ENCODE measurements at regions of chr10 and their contacts with region 1.

Region 1: DNA sequence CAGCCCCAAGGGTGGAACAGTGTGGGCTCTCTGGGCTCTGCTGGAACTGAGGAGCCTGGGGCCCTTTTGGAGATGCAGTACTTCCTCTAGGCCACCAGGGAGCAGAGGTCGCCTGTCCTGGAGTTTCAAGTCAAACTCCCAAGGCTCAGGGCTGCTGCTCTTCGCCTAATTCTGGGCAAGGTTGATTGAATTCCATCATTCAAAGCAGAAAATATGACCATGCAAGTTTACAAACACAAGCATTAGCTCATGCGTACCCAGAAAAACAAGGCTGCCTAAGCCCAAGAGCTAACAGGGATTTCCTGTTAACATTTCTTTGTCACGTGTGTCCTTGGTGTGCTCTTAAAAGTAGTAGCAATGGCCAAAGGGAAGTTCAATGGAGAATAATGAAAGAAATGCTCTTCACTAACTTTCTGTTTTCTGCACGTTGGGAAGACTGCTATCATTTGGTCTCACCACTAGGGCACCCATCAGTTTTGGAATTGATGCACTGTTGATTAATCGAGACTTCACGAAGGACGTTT is 20.1 kb downstream of the LDB3 start:
- DNase-seq: peak; percentile 48
- H3K4me3 ChIP-seq: no peak overlapping the region
- H3K27ac ChIP-seq: no peak overlapping the region
- H3K4me1 ChIP-seq: no peaks in the 10 kb centered on the region
- H3K27me3 ChIP-seq: no peaks in the 10 kb centered on the region
- CTCF ChIP-seq: peak; percentile 73 to 84 (median 79)
- POLR2A ChIP-seq: no peak

Region 2: DNA sequence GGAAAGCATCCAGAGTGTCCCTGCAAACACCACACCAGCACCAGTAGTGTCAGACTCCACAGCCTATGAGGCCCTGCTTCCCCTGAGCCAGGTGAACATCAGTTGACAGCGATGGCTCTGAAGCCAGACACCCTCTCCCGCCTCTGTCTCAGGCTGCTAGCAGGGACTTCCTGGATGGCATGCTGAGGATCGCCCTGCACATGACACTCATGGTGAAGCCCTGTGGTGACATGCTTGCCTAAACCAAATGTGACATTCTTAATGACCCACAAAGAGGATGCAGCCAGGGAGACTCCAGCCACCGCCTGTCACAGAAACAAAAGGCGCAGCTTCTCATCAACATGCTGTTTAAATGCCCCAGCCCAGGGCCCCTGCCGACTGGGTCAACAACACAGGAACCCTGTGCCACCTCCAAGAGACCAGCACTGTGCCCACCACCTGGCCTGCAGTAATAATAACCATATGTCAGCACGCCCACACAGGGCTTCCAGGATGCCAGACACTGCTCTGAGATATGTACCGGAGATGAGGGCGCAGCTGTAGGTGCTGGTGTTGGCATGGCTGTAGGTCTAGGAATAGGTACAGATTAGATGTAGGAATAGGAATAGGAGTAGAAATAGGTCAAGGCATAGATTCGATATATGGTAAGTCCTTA is 403.2 kb before region 1 on chr10:
- intact Hi-C with region 1: no loop called
- DNase-seq: no peak
- H3K4me3 ChIP-seq: no peak overlapping the region
- H3K27ac ChIP-seq: no peak overlapping the region
- H3K4me1 ChIP-seq: no peaks in the 10 kb centered on the region
- H3K27me3 ChIP-seq: no peaks in the 10 kb centered on the region
- CTCF ChIP-seq: no peak
- POLR2A ChIP-seq: no peak

Region 3: GRCh38 chr10:86899670-86900276 is 211.3 kb after region 1 on chr10:
- intact Hi-C with region 1: loop called (anchors 5 kb)
- DNase-seq: peak; percentile 78
- H3K4me3 ChIP-seq: no peak overlapping the region
- H3K27ac ChIP-seq: peak overlapping the region in 1 of 2 donors; percentile 18
- H3K4me1 ChIP-seq: peaks cover 8% of the 10 kb centered on the region
- H3K27me3 ChIP-seq: no peaks in the 10 kb centered on the region
- CTCF ChIP-seq: peak; percentile 37 to 85 (median 74)
- POLR2A ChIP-seq: no peak

Region 4: DNA sequence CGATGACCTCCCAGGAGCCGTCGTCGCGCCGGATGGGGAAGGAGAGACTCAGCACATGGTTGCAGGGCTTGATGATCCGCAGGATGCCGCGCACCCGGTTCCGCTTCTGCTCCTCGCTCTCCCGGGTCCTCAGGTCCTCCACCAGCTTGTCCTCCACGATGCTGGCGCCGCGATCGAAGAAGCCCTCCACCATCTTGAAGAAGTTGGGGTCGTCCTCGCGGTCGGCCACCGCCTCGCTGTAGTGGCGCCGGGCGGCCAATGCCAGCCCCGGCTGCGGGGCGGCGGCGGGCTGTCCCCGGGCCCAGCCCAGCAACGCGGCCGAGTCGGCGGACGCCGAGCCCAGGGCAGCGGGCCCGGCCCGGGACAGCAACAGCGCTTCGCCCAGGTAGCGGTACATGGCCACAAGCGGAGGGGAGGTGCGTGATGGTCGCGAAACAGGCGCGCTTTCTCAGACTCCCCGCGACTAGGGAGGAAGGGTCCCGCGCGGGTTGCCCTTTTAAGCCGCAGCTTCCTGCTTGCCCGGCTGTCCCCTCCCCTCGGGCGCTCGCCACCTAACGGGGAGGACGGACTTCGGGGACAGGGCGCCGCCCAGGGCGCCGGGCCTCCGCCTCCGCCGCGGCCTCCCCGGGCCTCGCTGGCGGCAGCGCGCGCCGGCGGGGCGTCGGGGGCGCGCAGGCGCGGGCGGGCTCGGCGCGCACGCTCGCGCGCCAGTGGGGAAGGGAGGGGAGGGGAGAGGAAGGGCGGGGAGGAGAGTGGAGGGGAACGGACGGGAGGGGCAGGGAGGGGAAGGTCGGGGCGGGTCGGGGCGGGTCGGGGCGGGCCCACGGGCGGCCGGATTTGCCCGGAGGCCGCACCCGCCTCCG is 406.1 kb after region 1 on chr10 and contains the starts of genes GLUD1 and SHLD2:
- intact Hi-C with region 1: loop called (anchors 10 kb)
- DNase-seq: peak; percentile 95
- H3K4me3 ChIP-seq: peak within 1 kb of the TSS; percentile 83 to 86
- H3K27ac ChIP-seq: peak within 1 kb of the TSS; percentile 94 to 96
- H3K4me1 ChIP-seq: no peaks in the 10 kb centered on the region
- H3K27me3 ChIP-seq: no peaks in the 10 kb centered on the region
- CTCF ChIP-seq: peak in 2 of 4 experiments; percentile 27 to 31
- POLR2A ChIP-seq: peak; percentile 69
- total RNA-seq, gene GLUD1: 154 to 437 TPM
- total RNA-seq, gene SHLD2: 25.2 to 43.5 TPM